Naive thymus-derived CD4-positive, alpha-beta T cell (primary cell): ENCODE measurements at regions of chr3 and their contacts with region 1.

Region 1: DNA sequence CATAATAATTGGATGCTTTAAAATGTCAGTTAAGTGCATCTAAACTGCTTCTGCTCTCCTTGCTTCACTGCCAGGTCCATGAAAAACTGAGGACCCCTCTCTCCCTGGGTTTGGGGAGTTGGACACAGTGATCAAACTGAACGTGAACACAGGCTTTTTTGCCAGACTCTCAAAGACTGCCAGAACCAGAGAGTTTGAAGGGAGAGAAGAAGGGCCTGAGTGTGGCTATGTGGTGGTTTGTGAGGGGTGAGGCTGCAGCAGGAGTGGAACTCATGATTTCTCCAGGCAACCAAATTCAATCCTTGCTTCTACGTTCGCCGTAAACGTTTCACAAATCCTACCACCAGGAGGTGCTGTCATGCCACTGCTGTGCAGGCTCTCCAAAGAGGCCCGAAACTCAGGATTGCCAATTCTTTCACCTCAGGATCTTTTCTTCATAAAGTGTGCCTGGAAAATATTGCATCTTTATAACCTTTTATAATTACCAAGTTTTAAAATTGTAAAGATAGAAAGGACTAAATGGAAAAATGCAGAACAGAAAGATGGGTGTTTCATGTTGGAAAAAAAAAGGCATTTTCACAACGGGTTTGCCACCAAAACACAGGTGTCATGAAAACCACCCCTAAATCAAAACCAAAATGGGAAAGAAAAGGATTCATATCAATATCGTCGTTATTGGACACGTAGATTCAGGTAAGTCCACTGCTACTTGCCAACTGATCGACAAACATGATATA is 19.7 kb downstream of the TM4SF4 start:
- DNase-seq: no peak
- ATAC-seq: peak; percentile 55
- H3K4me3 ChIP-seq: no peak overlapping the region
- H3K4me3 Mint-ChIP-seq: no peak overlapping the region
- H3K27ac ChIP-seq: no peak overlapping the region
- H3K27ac Mint-ChIP-seq: no peak overlapping the region
- H3K4me1 ChIP-seq: no peaks in the 10 kb centered on the region
- H3K4me1 Mint-ChIP-seq: peaks cover 0 to 4% (median 0%) of the 10 kb centered on the region in 7 donors
- H3K27me3 ChIP-seq: no peaks in the 10 kb centered on the region
- H3K27me3 Mint-ChIP-seq: peaks cover 15 to 29% (median 20%) of the 10 kb centered on the region in 5 donors

Region 2: DNA sequence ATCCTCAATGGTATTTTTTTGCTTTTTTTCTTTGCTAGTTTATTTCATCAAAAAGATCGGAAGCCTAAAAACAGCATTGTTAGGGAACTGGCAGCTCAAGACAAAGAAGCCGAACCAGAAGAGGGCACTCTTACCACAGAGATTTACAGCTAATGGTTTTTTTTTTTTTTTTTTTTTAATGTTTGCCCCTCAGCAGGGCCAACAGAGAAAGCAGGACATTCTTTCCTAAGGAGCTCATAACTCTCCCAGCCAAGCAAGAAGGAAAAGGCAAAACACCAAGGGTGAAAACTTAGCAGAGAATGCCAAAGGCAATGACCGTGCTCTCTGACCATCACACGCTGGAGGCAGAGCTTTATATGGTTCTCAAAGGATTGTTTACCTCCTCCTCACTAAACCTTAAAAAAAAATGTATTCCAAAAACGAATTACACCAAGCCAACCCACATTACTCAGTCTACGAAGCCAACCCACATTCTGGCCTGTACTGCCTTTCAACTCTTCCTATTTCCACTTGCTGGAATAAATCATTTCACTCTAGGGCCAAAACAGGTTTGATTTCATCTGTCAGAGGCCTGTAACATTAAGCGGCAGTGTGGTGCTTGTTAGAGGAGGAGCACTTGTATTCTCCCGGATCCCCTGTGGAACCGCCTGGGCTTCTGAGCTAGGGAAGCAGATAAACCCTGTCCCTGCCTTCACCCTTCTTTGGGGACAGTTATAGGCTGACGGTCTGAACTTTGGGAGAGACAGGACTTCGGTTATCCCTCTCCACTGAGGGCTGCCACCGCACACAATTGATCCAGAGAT is 538.4 kb before region 1 on chr3:
- CTCF ChIA-PET with region 1: no interaction called
- POLR2A ChIA-PET with region 1: no interaction called
- intact Hi-C with region 1: loop called in 1 of 2 experiments (anchors 10 kb)
- DNase-seq: peak in 4 of 9 donors; percentile 13 to 41 (median 32)
- ATAC-seq: peak; percentile 41
- H3K4me3 ChIP-seq: no peak overlapping the region
- H3K4me3 Mint-ChIP-seq: no peak overlapping the region
- H3K27ac ChIP-seq: no peak overlapping the region
- H3K27ac Mint-ChIP-seq: no peak overlapping the region
- H3K4me1 ChIP-seq: no peaks in the 10 kb centered on the region
- H3K4me1 Mint-ChIP-seq: peaks cover 0 to 13% (median 6%) of the 10 kb centered on the region in 7 donors
- H3K27me3 ChIP-seq: no peaks in the 10 kb centered on the region
- H3K27me3 Mint-ChIP-seq: peaks cover 0 to 17% (median 0%) of the 10 kb centered on the region in 5 donors